AG04449 (cell line): ENCODE measurements at regions of chr10 and their contacts with region 1.

Region 1: GRCh38 chr10:28381903-28382347 is 79.1 kb upstream of the MPP7 start:
- DNase-seq: peak; percentile 65
- H3K4me3 ChIP-seq: no peak overlapping the region
- CTCF ChIP-seq: peak; percentile 78

Region 2: GRCh38 chr10:28250782-28251181 is 131.1 kb before region 1 on chr10:
- CTCF ChIA-PET with region 1: interaction called, 399 read pairs
- POLR2A ChIA-PET with region 1: no interaction called
- DNase-seq: no peak
- H3K4me3 ChIP-seq: no peak overlapping the region
- CTCF ChIP-seq: peak; percentile 15

Region 3: DNA sequence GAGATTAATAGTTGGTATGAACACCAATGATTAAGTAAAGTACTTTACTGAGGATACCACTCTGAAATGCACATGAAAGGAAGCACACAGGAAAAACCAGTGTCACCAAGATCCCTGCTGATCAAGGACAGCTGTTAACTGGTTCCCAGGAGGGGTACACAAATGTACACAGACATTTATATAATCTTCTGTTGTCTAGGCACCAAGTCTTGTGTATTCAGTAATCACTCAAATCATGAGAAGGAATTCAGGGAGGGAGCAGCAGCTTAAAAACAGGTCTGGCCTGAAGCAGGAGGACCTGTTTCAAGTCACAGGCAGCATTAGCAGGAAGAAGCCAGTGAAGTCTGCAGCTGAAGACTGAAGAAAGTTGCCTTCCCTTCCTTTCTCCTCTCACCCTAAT is 97.8 kb before region 1 on chr10:
- CTCF ChIA-PET with region 1: interaction called, 17 read pairs
- POLR2A ChIA-PET with region 1: no interaction called
- DNase-seq: no peak
- H3K4me3 ChIP-seq: no peak overlapping the region
- CTCF ChIP-seq: no peak

Region 4: GRCh38 chr10:28302638-28303488 is 79.1 kb before region 1 on chr10 and contains the start of gene MPP7:
- CTCF ChIA-PET with region 1: interaction called, 56 read pairs
- POLR2A ChIA-PET with region 1: no interaction called
- DNase-seq: peak; percentile 95
- H3K4me3 ChIP-seq: peak within 1 kb of the TSS; percentile 71
- CTCF ChIP-seq: no peak

Region 5: GRCh38 chr10:28367929-28368484 is 13.9 kb before region 1 on chr10:
- CTCF ChIA-PET with region 1: interaction called, 15 read pairs
- POLR2A ChIA-PET with region 1: no interaction called
- DNase-seq: no peak
- H3K4me3 ChIP-seq: peak overlapping the region; percentile 12; the same call in 1 of the 2 replicates
- CTCF ChIP-seq: no peak

Region 6: DNA sequence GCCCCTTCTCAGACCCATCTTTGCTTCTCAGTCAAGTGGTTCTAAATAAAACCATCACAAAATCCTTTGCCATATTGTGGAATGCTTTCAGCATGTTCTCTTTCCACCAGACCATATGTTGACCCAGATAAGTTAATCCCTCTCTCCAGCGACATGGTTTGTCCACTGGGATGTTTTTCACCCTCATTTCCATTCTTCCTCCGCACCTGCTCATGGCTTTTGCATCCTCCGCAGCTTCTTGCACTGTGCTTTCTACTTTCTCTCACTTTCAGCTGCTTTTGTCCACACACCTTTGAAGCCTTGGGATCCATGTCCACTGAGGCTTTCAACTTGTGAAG is 98.7 kb after region 1 on chr10:
- CTCF ChIA-PET with region 1: no interaction called
- POLR2A ChIA-PET with region 1: no interaction called
- DNase-seq: no peak
- H3K4me3 ChIP-seq: no peak overlapping the region
- CTCF ChIP-seq: no peak

Region 7: DNA sequence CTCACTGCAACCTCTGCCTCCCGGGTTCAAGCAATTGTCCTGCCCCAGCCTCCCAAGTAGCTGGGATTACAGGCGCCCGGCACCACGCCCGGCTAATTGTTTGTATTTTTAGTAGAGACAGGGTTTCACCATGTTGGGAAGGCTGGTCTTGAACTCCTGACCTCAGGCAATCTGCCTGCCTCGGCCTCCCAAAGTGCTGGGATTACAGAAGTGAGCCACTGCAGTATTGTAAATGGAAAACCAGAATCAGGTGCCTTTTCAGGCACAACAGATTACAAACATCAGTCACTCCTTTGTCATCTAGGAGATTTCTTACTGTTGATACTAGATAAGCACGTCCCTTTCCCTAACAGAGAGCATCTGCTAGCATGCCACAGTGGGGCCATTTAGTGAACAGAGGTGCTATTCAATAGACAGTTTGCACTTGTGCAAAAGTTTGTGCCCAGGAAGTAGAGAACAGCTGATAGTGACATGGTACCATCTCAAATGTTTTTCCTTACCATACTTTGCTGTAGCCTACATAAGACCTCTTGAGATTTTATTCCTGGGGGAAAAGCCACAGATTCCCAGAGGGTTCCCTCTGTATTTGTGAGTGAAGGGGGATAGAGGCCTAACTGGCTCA is 126.5 kb after region 1 on chr10:
- CTCF ChIA-PET with region 1: no interaction called
- POLR2A ChIA-PET with region 1: no interaction called
- DNase-seq: no peak
- H3K4me3 ChIP-seq: no peak overlapping the region
- CTCF ChIP-seq: no peak

Region 8: GRCh38 chr10:28569506-28570159 is 187.7 kb after region 1 on chr10:
- CTCF ChIA-PET with region 1: no interaction called
- POLR2A ChIA-PET with region 1: no interaction called
- DNase-seq: no peak
- H3K4me3 ChIP-seq: no peak overlapping the region
- CTCF ChIP-seq: no peak